Activated CD4-positive, alpha-beta memory T cell treated with anti-CD3 and anti-CD28 coated beads, Interleukin-2, amount 10 ng/mL, durations not matched to agents 7 days and 5 days (primary cell): ENCODE measurements at regions of chr6 and their contacts with region 1.

Region 1: GRCh38 chr6:13574149-13574570 is 241 bp upstream of the SIRT5 start:
- DNase-seq: peak; percentile 92
- H3K4me3 Mint-ChIP-seq: peak overlapping the region; percentile 97
- H3K27ac Mint-ChIP-seq: peak overlapping the region; percentile 99
- H3K4me1 Mint-ChIP-seq: peaks cover 28% of the 10 kb centered on the region
- H3K27me3 Mint-ChIP-seq: peaks cover 1% of the 10 kb centered on the region

Region 2: GRCh38 chr6:13328076-13328874 is 245.9 kb before region 1 on chr6 and contains the start of gene TBC1D7:
- CTCF ChIA-PET with region 1: interaction called, 32 read pairs
- POLR2A ChIA-PET with region 1: interaction called, 44 read pairs
- DNase-seq: peak; percentile 94
- H3K4me3 Mint-ChIP-seq: peak within 1 kb of the TSS; percentile 93
- H3K27ac Mint-ChIP-seq: peak within 1 kb of the TSS; percentile 89
- H3K4me1 Mint-ChIP-seq: peaks cover 29% of the 10 kb centered on the region
- H3K27me3 Mint-ChIP-seq: no peaks in the 10 kb centered on the region
- total RNA-seq, gene TBC1D7: 18.7 to 19.1 TPM

Region 3: GRCh38 chr6:13349811-13350506 is 224.2 kb before region 1 on chr6:
- CTCF ChIA-PET with region 1: interaction called, 23 read pairs
- POLR2A ChIA-PET with region 1: interaction called, 6 read pairs
- DNase-seq: no peak
- H3K4me3 Mint-ChIP-seq: no peak overlapping the region
- H3K27ac Mint-ChIP-seq: no peak overlapping the region
- H3K4me1 Mint-ChIP-seq: peaks cover 16% of the 10 kb centered on the region
- H3K27me3 Mint-ChIP-seq: peaks cover 11% of the 10 kb centered on the region

Region 4: DNA sequence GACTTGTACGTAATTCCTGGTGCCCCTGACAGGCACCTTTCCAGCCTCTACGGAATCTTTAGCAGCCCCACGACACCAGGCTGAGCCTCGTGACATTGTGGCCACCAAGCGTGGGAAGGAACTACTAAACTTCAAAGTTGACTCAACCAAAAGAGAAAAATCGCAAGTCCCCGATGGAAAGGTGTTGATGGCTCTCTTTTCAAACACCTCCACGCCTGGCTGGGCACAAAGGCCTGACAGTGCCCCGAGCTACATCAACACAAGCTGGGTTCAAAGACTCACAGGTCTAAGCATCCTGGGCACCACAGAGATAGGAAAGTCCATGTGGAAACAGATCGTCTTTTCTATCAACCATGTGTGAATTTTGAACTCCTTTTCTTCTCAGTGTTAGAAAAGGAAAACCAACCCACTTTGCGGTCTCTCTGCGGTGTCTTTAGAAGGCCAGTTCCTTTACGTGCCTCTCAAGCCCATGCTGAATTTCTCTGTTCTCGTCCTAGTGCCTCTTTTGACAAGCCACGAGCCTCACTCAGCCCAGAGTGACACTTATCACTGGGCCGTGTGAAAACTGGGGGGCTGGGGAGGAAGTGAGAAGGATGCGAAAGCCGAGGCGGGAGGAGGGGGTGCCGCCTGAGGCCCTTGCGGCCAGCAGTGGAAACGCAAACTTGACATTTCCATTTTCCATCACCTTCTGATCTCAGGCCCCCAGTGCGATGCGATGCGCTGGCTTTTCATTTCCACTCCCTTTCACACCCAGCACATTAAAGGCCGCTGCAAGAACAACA is 146.2 kb before region 1 on chr6:
- CTCF ChIA-PET with region 1: interaction called, 9 read pairs
- POLR2A ChIA-PET with region 1: interaction called, 11 read pairs
- DNase-seq: peak; percentile 73
- H3K4me3 Mint-ChIP-seq: peak overlapping the region; percentile 43
- H3K27ac Mint-ChIP-seq: peak overlapping the region; percentile 65
- H3K4me1 Mint-ChIP-seq: peaks cover 51% of the 10 kb centered on the region
- H3K27me3 Mint-ChIP-seq: no peaks in the 10 kb centered on the region

Region 5: DNA sequence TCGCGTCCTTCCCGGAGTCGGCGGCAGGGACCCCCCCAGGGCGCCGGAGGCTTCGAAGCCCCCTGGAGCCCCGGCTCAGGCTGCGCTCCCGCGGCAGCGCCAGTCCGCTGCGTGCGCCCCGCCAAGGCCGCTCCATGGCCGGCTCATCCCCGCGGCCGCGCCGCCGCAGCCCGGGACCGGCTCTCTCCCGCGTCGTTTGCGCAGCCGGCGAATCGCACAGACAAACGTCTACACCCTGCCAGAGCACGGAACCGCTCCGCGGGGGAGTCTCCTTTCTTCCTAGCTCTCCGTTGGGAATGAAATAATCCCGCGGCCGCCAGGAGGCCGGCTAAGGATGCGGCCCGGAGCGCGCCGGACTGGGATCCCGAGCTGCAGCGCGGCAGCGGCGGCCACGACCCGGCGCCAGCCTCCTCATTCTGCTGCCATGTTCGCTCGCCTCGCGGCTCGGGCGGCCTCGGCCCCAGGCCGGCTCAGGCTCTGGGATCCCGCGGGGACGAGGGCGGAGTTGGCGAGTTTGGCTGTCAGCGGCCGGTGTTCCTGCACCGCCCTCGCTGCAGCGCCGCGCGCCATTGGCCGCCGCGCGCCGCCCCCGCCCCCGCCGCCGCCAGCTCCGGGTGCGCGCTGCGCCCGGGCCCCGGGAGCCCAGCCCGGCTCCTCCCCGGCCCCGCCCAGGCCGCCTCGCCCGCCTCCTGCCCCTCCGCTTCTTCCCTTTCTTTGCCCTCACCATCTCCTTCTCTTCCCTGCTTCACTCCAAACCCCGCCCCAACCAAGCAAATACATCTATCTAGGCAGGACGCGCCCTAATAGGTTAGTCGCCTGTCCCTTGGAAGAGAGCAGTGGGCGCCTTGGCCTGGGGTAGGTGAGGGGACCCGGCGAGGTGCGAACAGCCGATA is 86.8 kb before region 1 on chr6 and contains the start of gene GFOD1:
- CTCF ChIA-PET with region 1: interaction called, 13 read pairs
- POLR2A ChIA-PET with region 1: interaction called, 18 read pairs
- DNase-seq: peak; percentile 81
- H3K4me3 Mint-ChIP-seq: peak within 1 kb of the TSS; percentile 79
- H3K27ac Mint-ChIP-seq: peak within 1 kb of the TSS; percentile 52
- H3K4me1 Mint-ChIP-seq: peaks cover 41% of the 10 kb centered on the region
- H3K27me3 Mint-ChIP-seq: peaks cover 24% of the 10 kb centered on the region
- total RNA-seq, gene GFOD1: 3.0 TPM

Region 6: DNA sequence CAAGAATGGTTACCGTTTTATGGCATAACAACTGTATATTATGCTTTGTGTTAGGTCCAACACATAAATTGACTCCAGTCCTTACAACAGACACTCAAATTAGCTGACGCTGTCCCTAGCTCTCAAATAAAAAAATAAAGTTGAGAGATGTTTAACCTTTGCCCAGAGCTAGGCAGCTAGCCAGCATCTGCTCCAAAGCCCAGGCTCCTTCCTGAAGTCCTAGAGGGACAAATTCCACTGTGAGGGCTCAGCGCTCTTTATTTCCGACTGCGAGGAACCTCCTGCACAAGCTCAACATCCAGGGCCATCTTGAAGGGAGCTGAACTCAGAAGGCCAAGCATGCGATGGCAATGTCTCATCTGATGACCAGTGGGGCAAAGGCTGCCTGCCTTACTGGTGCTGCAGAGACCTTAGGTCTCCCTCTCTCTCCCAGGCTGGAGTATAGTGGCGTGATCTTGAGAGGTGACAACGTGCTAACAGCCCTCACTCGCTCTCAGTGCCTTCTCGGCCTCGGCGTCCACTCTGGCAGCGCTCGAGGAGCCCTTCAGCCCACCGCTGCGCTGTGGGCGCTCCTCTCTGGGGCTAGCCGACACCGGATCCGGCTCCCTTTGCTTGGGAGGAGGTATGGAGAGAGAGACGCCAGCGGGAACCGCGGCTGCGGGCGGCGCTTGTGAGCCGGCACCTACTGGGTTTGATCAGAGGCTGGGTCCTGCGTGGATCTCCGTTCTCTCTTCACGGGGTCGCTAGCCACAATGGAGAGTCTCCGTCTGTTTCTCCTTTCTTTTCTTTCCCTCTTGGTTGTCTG is 62.0 kb before region 1 on chr6:
- CTCF ChIA-PET with region 1: no interaction called
- POLR2A ChIA-PET with region 1: no interaction called
- DNase-seq: no peak
- H3K4me3 Mint-ChIP-seq: no peak overlapping the region
- H3K27ac Mint-ChIP-seq: no peak overlapping the region
- H3K4me1 Mint-ChIP-seq: no peaks in the 10 kb centered on the region
- H3K27me3 Mint-ChIP-seq: peaks cover 10% of the 10 kb centered on the region

Region 7: DNA sequence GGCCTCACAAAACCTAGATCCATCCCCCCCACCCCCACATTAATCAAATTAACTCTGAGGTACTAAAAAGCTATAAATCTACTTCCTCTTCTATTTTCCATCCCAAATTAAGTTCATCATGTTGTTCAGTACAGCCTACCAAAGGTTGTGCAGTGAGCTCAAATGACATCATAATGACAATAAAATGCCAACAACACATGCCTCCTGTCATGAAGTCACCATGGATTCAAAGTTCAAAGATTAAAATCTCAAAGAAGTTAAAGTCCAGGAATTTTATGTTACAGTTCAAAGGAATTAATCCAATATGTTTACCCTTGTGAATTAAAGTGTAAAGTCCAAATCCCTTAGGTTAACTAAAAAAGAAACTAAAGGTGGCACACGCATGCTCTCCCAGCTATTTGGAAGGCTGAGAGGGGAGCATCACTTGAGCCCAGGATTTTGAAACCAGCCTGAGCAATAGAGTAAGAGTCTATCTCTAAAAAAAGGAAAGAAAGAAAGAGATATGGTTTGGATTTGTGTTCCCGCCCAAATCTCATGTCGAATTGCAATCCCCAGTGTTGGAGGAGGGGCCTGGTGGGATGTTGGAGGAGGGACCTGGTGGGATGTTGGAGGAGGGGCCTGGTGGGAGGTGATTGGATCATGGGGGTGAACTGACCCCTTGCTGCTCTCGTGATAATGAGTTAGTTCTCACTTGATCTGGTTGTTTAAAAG is 25.5 kb before region 1 on chr6:
- CTCF ChIA-PET with region 1: no interaction called
- POLR2A ChIA-PET with region 1: no interaction called
- DNase-seq: no peak
- H3K4me3 Mint-ChIP-seq: no peak overlapping the region
- H3K27ac Mint-ChIP-seq: no peak overlapping the region
- H3K4me1 Mint-ChIP-seq: no peaks in the 10 kb centered on the region
- H3K27me3 Mint-ChIP-seq: peaks cover 7% of the 10 kb centered on the region

Region 8: DNA sequence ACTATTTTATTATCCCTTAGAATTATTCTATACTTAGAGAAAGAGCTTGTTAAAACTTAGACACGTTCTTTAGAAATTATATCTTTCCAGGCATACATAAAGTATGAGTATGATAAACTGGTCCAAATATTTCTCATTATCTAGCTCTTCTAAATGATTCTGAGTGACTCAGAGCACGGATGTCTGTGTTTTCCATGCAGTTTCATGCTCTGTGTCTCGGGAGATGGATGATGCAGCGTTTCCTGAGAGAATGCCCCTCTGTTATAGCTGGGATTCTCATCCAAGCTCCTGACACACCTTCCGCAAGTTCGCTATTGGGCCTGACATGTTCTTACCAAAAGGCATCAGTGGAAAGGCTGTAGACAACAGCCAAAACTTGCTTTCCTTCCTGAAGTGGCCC is 19.6 kb after region 1 on chr6:
- CTCF ChIA-PET with region 1: interaction called, 18 read pairs
- POLR2A ChIA-PET with region 1: interaction called, 5 read pairs
- DNase-seq: no peak
- H3K4me3 Mint-ChIP-seq: no peak overlapping the region
- H3K27ac Mint-ChIP-seq: no peak overlapping the region
- H3K4me1 Mint-ChIP-seq: peaks cover 18% of the 10 kb centered on the region
- H3K27me3 Mint-ChIP-seq: no peaks in the 10 kb centered on the region

Region 9: GRCh38 chr6:13711733-13712598 is 137.8 kb after region 1 on chr6 and contains the start of gene RANBP9:
- CTCF ChIA-PET with region 1: interaction called, 9 read pairs
- POLR2A ChIA-PET with region 1: interaction called, 24 read pairs
- DNase-seq: peak; percentile 88
- H3K4me3 Mint-ChIP-seq: peak within 1 kb of the TSS; percentile 87
- H3K27ac Mint-ChIP-seq: peak within 1 kb of the TSS; percentile 89
- H3K4me1 Mint-ChIP-seq: peaks cover 51% of the 10 kb centered on the region
- H3K27me3 Mint-ChIP-seq: no peaks in the 10 kb centered on the region
- total RNA-seq, gene RANBP9: 66.8 to 69.1 TPM